ENCODE measurements at regions of chr14 and their contacts with region 1.

Region 1: DNA sequence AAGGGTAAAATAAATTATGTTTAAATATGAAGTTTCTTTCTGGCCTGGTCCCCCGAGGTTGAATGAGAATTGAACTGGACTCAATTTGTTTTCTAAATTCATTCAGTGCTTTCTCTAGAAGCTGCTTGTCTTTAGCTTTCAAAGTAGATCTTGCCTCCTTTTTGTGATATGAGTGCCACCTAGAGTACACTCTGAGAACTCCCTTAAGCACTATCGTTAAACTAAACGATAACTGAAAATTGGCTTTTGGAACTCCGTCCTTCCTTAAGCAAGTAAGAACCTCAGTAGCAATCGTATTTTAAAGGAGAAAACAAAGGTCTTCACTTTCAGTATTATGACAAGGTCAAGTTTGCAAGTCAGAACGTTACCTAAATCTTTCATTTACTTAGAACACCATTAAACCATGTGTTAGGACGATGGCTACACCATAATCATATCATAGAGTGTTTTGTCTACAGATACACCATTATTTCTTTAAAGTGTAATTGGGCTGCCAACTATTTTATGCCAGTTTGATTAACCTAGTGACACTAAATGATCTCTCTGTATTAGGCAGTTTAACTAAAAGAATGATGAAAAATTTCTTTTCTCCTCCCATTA is 364.8 kb downstream of the SNAPC1 start:
- DNase-seq: peak in 1 of 2 donors; percentile 5
- ATAC-seq: peak in 1 of 8 donors; percentile 69
- H3K4me3 ChIP-seq: no peak overlapping the region
- H3K27ac ChIP-seq: no peak overlapping the region
- H3K4me1 ChIP-seq: no peaks in the 10 kb centered on the region
- H3K27me3 ChIP-seq: peaks cover 0 to 71% (median 50%) of the 10 kb centered on the region in 7 donors
- CTCF ChIP-seq: peak; percentile 31 to 80 (median 72)

Region 2: DNA sequence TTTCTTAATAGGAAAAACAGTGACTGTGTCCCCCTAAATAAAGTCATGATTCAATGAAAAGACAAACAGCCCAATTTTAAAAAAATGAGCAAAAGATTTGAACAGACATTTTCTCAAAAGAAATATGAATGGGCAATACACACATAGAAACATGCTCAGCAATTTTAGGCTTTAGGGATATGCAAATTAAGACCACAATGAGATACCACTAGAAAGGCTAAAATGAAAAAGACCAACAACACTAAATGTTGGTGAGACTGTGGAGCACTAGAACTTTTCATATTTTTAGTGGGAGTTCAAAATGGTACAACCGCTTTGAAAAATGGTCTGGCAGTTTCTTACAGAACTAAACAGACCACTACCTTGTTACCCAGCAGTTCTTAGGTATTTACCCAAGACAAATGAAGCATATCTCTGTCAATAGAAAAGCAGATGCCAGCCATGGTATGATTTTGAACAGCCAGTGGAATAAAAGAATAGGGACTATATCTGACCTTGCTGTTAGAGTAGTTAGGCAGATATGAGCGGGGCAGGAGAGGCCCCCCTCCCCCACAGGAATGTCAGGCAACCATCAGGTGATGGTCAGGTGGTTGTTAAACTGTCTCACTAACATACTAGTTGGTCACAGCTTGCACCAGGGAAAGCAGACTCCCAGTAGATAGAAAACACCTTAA is 696.8 kb before region 1 on chr14:
- intact Hi-C with region 1: no loop called
- DNase-seq: no peak
- ATAC-seq: no peak
- H3K4me3 ChIP-seq: no peak overlapping the region
- H3K27ac ChIP-seq: peak overlapping the region in 1 of 10 donors; percentile 59
- H3K4me1 ChIP-seq: peaks cover 0 to 79% (median 44%) of the 10 kb centered on the region in 9 donors
- H3K27me3 ChIP-seq: no peaks in the 10 kb centered on the region
- CTCF ChIP-seq: no peak

Region 3: DNA sequence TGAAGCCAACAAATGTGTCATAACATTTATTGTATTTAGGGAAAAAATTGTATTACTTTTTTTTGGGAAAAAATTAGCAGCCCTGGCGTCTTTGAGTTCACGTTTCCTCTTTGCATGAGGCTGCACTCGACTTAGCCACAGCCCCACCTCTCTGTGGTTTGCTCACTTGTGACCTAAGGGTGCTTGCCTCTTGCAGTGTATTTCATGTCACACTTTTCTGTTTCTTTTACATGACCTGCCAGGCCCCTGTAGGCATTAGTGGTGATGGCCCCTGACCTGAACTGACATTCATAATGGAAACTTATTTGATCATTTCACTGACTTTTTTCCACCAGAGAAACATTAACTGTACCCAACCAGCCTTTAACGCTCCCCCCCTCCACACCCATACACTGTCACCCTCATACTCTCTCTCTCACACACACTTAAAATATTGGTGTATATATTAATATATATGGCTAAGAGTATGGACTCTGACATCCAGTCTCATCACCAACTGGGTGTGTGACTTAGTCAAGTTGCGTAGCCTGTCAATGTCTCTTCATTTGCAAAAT is 682.7 kb before region 1 on chr14:
- intact Hi-C with region 1: loop called in 1 of 10 experiments (anchors 5 kb)
- DNase-seq: no peak
- ATAC-seq: peak in 2 of 8 donors; percentile 46 to 51
- H3K4me3 ChIP-seq: no peak overlapping the region
- H3K27ac ChIP-seq: peak overlapping the region in 1 of 10 donors; percentile 32
- H3K4me1 ChIP-seq: peaks cover 0 to 28% (median 10%) of the 10 kb centered on the region in 9 donors
- H3K27me3 ChIP-seq: no peaks in the 10 kb centered on the region
- CTCF ChIP-seq: no peak

Region 4: GRCh38 chr14:61456720-61457119 is 670.3 kb before region 1 on chr14:
- intact Hi-C with region 1: loop called in 6 of 10 experiments (anchors 2 to 10 kb)
- DNase-seq: peak; percentile 58 to 91
- ATAC-seq: peak; percentile 61 to 82 (median 76)
- H3K4me3 ChIP-seq: no peak overlapping the region
- H3K27ac ChIP-seq: no peak overlapping the region
- H3K4me1 ChIP-seq: peaks cover 0 to 53% (median 27%) of the 10 kb centered on the region in 9 donors
- H3K27me3 ChIP-seq: no peaks in the 10 kb centered on the region
- CTCF ChIP-seq: peak; percentile 70 to 93 (median 90)

Region 5: GRCh38 chr14:61894452-61895077 is 232.4 kb before region 1 on chr14:
- intact Hi-C with region 1: loop called (anchors 2 to 10 kb)
- DNase-seq: peak; percentile 24 to 48
- ATAC-seq: peak in 1 of 8 donors; percentile 65
- H3K4me3 ChIP-seq: no peak overlapping the region
- H3K27ac ChIP-seq: no peak overlapping the region
- H3K4me1 ChIP-seq: peaks cover 0 to 3% (median 0%) of the 10 kb centered on the region in 9 donors
- H3K27me3 ChIP-seq: peaks cover 0 to 19% (median 3%) of the 10 kb centered on the region in 7 donors
- CTCF ChIP-seq: peak in 8 of 9 donors; percentile 29 to 71 (median 61)

Region 6: GRCh38 chr14:62071039-62071438 is 55.9 kb before region 1 on chr14:
- intact Hi-C with region 1: no loop called
- DNase-seq: no peak
- ATAC-seq: no peak
- H3K4me3 ChIP-seq: no peak overlapping the region
- H3K27ac ChIP-seq: no peak overlapping the region
- H3K4me1 ChIP-seq: no peaks in the 10 kb centered on the region
- H3K27me3 ChIP-seq: peaks cover 0 to 8% (median 0%) of the 10 kb centered on the region in 7 donors
- CTCF ChIP-seq: no peak